IMR-90 (cell line): ENCODE measurements at regions of chr20 and their contacts with region 1.

Region 1: DNA sequence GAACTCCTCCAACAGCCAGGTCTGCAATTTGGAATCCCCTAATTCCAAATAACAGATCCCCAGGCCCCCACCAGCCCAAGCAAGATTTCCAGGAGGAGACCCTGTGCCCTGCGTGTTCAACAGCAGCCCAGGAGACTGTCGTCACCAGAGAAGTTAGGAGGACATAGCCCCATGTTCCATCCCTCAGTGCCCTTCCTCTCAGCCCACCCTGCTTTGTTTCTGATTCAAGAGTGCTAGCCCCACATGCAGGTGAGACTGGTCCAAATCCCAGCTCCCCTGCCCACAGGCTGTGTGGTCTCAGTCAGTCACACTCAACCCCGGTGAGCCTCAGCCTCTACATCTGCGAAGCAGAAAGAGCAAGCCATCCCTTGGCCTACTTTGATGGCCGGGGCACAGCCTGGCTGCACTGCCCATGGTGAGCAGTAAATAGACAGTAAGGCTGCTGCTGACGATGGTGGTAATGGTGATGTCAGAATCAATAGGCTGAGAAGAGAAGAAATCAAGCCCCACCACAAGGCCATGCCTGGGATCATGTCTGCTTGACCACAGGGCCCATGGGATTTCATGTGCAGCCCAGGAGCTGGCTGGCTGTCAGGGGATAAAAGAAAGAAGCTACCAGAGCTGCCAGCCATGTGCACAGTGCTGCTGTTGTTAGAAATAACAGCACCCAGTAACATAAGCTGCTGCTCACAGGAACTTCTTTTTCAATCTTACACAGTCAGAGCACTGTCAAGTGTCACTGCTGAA is 51.5 kb upstream of the NXT1 start:
- DNase-seq: no peak
- ATAC-seq: no peak
- H3K4me3 ChIP-seq: no peak overlapping the region
- H3K27ac ChIP-seq: no peak overlapping the region
- H3K4me1 ChIP-seq: no peaks in the 10 kb centered on the region
- H3K27me3 ChIP-seq: peaks cover 5% of the 10 kb centered on the region; the same call in 1 of the 2 replicates
- CTCF ChIP-seq: no peak
- POLR2A ChIP-seq: no peak
- RAD21 ChIP-seq: no peak

Region 2: DNA sequence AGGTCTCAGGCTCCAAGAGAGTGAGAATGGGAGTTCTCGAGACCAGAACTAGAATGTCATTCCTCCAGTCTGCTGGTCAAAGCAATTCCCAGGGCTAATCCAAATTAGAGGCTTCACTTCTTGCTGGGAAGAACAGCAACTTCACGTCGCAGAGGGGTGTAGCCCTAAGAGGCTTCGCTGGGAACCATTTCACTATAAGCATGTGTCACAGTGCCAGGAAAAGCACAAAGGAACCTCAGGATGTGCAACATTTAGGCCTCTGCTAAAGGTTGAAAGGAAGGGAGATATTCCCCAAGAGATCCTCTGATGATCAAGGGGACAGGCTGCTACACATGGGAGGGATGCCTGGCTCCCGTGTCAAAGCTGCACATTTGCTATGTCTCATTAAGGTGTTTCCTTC is 15.6 kb after region 1 on chr20:
- CTCF ChIA-PET with region 1: no interaction called
- POLR2A ChIA-PET with region 1: no interaction called
- dilution Hi-C with region 1: no loop called
- in situ Hi-C with region 1: no loop called
- intact Hi-C with region 1: loop called (anchors 1 kb)
- DNase-seq: no peak
- ATAC-seq: no peak
- H3K4me3 ChIP-seq: no peak overlapping the region
- H3K27ac ChIP-seq: no peak overlapping the region
- H3K4me1 ChIP-seq: no peaks in the 10 kb centered on the region
- H3K27me3 ChIP-seq: peaks cover 8% of the 10 kb centered on the region
- CTCF ChIP-seq: no peak
- POLR2A ChIP-seq: no peak
- RAD21 ChIP-seq: no peak